T-cell (primary cell): ENCODE measurements at regions of chr16 and their contacts with region 1.

Region 1: GRCh38 chr16:80751190-80751589 is 53.2 kb downstream of the CDYL2 start:
- DNase-seq: no peak
- ATAC-seq: no peak
- H3K4me3 ChIP-seq: no peak overlapping the region
- H3K4me3 Mint-ChIP-seq: no peak overlapping the region
- H3K27ac ChIP-seq: no peak overlapping the region
- H3K27ac Mint-ChIP-seq: peak overlapping the region in 1 of 2 donors; percentile 4
- H3K4me1 ChIP-seq: peaks cover 0 to 7% of the 10 kb centered on the region in 2 experiments
- H3K4me1 Mint-ChIP-seq: peaks cover 15 to 37% (median 19%) of the 10 kb centered on the region in 3 donors
- H3K27me3 ChIP-seq: no peaks in the 10 kb centered on the region
- H3K27me3 Mint-ChIP-seq: no peaks in the 10 kb centered on the region

Region 2: GRCh38 chr16:80723091-80723490 is 28.1 kb before region 1 on chr16:
- CTCF ChIA-PET with region 1: no interaction called
- POLR2A ChIA-PET with region 1: interaction called in 1 of 2 experiments, 10 read pairs
- DNase-seq: no peak
- ATAC-seq: no peak
- H3K4me3 ChIP-seq: no peak overlapping the region
- H3K4me3 Mint-ChIP-seq: no peak overlapping the region
- H3K27ac ChIP-seq: no peak overlapping the region
- H3K27ac Mint-ChIP-seq: no peak overlapping the region
- H3K4me1 ChIP-seq: peaks cover 0 to 20% of the 10 kb centered on the region in 2 experiments
- H3K4me1 Mint-ChIP-seq: peaks cover 46 to 62% (median 56%) of the 10 kb centered on the region in 3 donors
- H3K27me3 ChIP-seq: no peaks in the 10 kb centered on the region
- H3K27me3 Mint-ChIP-seq: no peaks in the 10 kb centered on the region